Gastrocnemius medialis (tissue), 4 donors: ENCODE measurements at regions of chr1 and their contacts with region 1.

Region 1: GRCh38 chr1:53851571-53852285 is 13.6 kb upstream of the NDC1 start:
- DNase-seq: no peak
- ATAC-seq: no peak
- H3K4me3 ChIP-seq: no peak overlapping the region
- H3K27ac ChIP-seq: no peak overlapping the region
- H3K4me1 ChIP-seq: no peaks in the 10 kb centered on the region
- H3K27me3 ChIP-seq: no peaks in the 10 kb centered on the region
- CTCF ChIP-seq: no peak
- POLR2A ChIP-seq: no peak

Region 2: DNA sequence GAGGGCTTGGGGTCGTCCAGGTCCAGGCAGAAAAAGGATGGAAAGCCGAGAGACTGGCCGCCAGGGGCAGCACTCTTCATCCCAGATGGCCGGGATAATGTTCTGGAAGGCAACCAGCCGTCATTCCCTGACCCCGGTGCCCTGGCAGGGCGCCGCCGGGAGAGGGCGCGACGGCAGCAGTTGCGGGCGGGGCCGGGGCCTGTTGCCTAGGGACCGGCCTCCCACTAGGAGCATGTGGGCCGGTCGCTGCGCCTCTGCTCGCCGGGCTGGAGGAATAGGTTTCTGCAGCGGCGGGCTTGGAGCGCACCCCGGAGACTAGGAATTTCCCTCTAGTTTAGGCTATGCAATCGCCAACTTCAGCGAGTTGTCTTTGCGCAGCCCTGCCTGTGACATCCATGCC is 381.6 kb before region 1 on chr1:
- in situ Hi-C with region 1: no loop called
- intact Hi-C with region 1: no loop called
- DNase-seq: peak in 1 of 2 donors; percentile 50
- ATAC-seq: peak; percentile 72 to 75
- H3K4me3 ChIP-seq: no peak overlapping the region
- H3K27ac ChIP-seq: no peak overlapping the region
- H3K4me1 ChIP-seq: no peaks in the 10 kb centered on the region
- H3K27me3 ChIP-seq: peaks cover 0 to 6% (median 0%) of the 10 kb centered on the region in 3 donors
- CTCF ChIP-seq: peak in 4 of 5 experiments; percentile 20 to 55 (median 50)
- POLR2A ChIP-seq: no peak

Region 3: GRCh38 chr1:53878492-53879105 is 26.9 kb after region 1 on chr1:
- in situ Hi-C with region 1: no loop called
- intact Hi-C with region 1: no loop called
- DNase-seq: no peak
- ATAC-seq: no peak
- H3K4me3 ChIP-seq: no peak overlapping the region
- H3K27ac ChIP-seq: no peak overlapping the region
- H3K4me1 ChIP-seq: no peaks in the 10 kb centered on the region
- H3K27me3 ChIP-seq: no peaks in the 10 kb centered on the region
- CTCF ChIP-seq: peak in 4 of 5 experiments; percentile 23 to 56 (median 39)
- POLR2A ChIP-seq: no peak

Region 4: DNA sequence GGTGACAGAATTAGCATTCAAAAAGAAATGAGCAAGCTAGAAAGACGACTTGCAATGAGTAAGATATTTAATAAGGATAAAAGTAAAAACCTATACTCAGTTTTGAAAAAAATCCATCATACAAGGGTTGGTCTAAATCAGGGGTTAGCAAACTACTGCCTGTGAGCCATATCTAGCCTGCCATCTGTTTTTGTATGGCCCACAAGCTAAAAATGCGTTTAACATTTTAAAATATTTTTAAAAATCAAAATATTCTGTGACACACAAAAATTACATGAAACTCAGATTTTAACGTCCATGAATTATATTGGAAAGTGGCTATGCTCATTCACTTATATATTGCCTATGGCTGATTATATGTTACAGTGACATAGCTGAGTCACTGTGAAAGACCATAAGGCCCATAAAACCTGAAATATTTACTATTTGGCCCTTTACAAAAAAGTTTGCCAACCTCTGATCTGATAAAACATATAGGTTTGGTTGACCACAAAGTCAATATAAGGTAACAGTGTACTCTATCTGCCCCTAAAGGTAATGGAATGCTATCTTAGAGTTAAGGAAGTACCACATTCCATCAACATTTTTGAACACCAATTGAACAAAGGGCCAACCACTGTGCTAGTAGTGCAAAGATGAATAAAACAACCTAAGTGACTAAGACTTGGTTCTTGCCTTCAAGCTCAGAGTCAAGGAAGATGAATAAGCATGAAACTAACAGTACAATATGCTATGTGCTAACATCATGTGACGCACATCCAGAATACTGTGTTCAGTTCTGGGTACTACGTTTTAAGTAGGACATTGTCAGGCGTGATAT is 90.6 kb after region 1 on chr1:
- in situ Hi-C with region 1: no loop called
- intact Hi-C with region 1: no loop called
- DNase-seq: no peak
- ATAC-seq: no peak
- H3K4me3 ChIP-seq: no peak overlapping the region
- H3K27ac ChIP-seq: no peak overlapping the region
- H3K4me1 ChIP-seq: peaks cover 7 to 17% of the 10 kb centered on the region in 2 donors
- H3K27me3 ChIP-seq: no peaks in the 10 kb centered on the region
- CTCF ChIP-seq: no peak
- POLR2A ChIP-seq: no peak

Region 5: DNA sequence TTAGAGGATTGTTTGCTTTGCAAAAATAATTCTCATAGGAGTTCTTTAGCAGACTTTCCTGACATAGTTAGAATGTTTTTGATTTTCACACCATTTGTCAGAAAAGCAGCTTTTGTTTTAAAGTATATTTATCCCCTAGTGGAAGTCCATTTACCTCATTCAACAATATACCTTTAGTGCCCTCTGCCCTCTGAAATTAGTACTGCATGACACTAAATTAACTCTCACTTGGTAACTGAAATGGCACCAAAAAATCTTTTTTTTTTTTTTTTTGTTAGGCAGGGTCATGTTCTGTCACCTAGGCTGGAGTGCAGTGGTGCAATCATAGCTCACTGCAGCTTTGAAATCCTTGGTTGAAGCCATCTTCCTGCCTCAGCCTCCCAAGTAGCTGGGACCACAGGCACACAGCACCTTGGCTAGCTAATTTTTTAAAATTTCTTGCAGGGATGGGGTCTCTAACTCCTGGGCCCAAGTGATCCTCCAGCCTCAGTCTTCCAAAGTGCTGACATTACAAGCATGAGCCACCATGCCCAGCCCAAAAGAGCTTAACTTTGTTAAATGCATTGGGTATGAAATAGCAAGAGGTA is 108.0 kb after region 1 on chr1:
- in situ Hi-C with region 1: loop called in 1 of 4 experiments (anchors 10 kb)
- intact Hi-C with region 1: no loop called
- DNase-seq: no peak
- ATAC-seq: no peak
- H3K4me3 ChIP-seq: no peak overlapping the region
- H3K27ac ChIP-seq: no peak overlapping the region
- H3K4me1 ChIP-seq: no peaks in the 10 kb centered on the region
- H3K27me3 ChIP-seq: no peaks in the 10 kb centered on the region
- CTCF ChIP-seq: peak in 3 of 5 experiments; percentile 30 to 46 (median 39)
- POLR2A ChIP-seq: no peak

Region 6: DNA sequence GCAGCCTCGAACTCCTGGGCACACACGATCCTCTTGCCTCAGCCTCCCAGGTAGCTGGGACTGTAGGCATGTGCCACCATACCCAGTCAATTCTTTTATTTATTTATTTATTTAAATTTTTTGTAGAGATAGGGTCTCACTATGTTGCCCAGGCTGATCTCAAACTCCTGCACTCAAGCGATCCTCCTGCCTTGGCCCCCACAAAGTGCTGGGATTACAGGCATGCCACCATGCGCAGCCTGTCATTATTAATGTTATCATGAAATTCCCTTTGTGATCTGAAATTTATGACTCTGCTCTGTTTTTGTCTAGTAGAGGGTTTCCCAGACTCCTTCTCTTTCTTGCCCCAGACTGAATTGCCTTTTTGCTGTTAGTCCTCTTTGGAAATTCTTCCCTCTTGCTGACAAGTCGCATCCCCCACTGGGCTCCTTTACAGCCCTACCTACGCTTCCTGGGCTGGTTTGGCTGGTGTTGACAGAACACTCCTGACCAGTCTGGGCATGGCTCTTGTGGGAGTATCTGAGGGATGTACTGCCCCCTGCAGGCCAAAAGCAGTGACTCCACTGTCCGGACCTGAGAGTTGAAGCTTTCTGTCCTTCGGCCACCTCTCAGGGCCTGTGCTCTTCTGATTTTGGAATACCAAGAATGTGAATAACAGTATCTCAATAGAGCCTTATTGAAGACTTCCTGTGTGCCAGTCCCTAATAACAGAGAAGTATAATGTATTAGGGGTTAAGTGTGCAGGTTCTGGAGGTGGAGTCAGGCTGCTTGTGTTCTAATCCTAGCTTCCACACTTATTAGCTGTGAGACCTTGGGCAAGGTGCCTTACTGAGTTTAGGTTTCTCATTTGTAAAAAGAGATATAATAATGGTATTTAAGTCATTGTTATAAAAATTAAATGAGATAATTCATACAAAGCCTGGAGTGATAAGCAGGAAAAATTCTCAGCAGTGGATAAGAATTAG is 229.9 kb after region 1 on chr1:
- in situ Hi-C with region 1: no loop called
- intact Hi-C with region 1: no loop called
- DNase-seq: peak in 1 of 2 donors; percentile 53
- ATAC-seq: peak; percentile 41 to 78
- H3K4me3 ChIP-seq: no peak overlapping the region
- H3K27ac ChIP-seq: no peak overlapping the region
- H3K4me1 ChIP-seq: peaks cover 17 to 19% of the 10 kb centered on the region in 2 donors
- H3K27me3 ChIP-seq: no peaks in the 10 kb centered on the region
- CTCF ChIP-seq: peak in 4 of 5 experiments; percentile 49 to 66 (median 56)
- POLR2A ChIP-seq: no peak